Astrocyte of the cerebellum (primary cell): ENCODE measurements at regions of chr2 and their contacts with region 1.

Region 1: DNA sequence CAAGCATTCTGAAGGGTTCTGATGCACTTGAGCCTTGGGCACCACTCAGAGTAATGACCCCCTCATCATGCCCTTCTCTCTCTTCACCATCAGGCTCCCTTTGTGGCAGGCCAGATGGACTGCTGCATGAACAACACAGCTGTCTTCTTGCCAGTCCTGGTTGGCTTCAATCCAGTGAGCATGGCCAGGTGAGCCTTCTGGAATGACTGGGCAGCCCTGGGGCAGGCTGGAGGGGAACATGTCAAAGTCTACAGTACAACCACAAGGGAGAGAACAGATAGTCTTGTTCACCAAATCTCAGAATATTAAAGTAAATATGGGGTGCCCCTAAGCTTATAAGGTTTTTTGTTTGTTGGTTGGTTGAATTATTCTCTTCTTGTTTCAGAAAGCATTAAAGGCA is 4.4 kb downstream of the GCKR start:
- DNase-seq: no peak
- H3K4me3 ChIP-seq: no peak overlapping the region
- CTCF ChIP-seq: no peak

Region 2: GRCh38 chr2:27537287-27537686 is 36.2 kb after region 1 on chr2:
- in situ Hi-C with region 1: loop called (anchors 5 kb)
- DNase-seq: no peak
- H3K4me3 ChIP-seq: no peak overlapping the region
- CTCF ChIP-seq: no peak